ENCODE measurements at regions of chr10 and their contacts with region 1.

Region 1: DNA sequence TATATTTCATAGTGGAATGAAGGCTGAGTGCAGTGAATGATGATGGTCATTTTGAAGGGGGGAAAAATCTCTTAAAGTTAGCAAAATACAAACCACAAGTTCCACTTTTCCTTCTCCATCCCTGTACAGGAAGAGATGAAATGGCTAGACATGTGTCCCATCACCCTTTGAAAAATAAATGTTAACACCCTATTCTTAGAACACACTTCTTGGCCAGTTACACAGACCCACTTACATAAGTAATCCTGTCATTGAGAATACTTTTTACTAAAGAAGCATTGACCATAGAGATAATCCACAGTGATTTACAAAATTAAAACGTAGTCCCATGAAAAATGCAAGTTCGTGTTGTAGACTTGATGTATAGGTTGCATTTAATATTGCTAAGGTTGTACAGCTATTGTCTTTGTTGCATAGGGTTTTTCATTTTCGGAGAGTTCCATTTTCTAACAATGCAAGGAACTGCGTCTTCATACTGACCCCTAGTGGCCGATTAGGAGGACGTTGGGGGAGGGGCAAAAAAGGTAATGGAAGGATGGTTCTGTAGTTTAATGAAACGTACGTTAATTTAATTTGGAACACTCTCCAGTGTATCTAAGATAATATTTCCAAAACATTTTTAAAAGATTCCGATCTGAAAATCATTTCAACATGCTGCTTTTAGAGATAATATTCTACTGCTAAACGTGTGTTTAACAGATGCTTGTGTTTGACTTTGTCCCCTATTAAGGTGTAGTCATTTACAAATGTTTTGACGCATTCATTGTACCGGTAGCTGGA is 60.9 kb downstream of the ARMC3 start:
- DNase-seq: peak; percentile 73

Region 2: GRCh38 chr10:21989453-21990154 is 999.2 kb before region 1 on chr10:
- in situ Hi-C with region 1: loop called (anchors 25 kb)
- DNase-seq: peak; percentile 56

Region 3: GRCh38 chr10:22550732-22551131 is 438.0 kb before region 1 on chr10:
- in situ Hi-C with region 1: loop called (anchors 25 kb)
- DNase-seq: peak; percentile 49